Mammary epithelial cell (primary cell): ENCODE measurements at regions of chr9 and their contacts with region 1.

Region 1: DNA sequence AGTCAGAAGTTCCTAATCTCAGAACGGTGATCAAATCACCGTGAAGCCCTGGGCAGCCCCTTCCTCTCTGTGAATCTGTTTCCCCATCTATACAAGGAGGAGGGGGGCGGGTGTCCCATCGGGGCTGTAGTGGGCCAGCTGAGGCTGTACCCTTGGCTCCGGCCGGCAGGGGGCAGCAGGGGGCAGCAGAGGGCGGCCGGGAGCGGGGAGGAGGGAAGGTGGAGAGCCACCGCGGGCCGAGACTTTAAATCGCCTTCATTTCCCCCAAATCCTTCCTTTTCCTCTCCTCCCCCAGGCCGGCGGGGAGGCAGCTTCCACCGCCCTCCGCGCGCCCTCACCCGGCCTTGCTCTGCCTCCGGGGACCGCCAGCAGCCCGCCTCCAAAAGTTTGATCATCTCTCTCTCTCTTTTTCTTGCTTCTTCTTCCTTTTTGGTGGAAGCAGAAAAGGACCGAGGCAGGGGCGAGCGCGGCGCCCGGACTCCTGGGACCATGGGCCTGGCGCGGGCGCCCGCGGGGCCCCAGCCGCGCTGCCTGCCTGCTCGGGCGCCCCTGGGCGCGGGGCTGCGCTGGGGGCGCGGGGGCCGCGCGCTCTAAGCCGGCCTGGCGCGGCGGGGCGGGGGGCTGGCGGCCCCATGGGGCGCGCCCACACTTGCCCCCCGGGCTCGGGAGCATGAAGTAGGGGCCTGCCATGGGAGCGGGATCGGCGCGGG is at the start of gene COL27A1:
- DNase-seq: peak; percentile 65
- H3K4me3 ChIP-seq: peak within 1 kb of the TSS; percentile 74 to 84 (median 77)
- H3K27ac ChIP-seq: peak within 1 kb of the TSS; percentile 26
- H3K4me1 ChIP-seq: peaks cover 29% of the 10 kb centered on the region
- H3K27me3 ChIP-seq: peaks cover 12% of the 10 kb centered on the region
- CTCF ChIP-seq: peak; percentile 53 to 88
- total RNA-seq, gene COL27A1: 8.7 to 30.0 TPM

Region 2: DNA sequence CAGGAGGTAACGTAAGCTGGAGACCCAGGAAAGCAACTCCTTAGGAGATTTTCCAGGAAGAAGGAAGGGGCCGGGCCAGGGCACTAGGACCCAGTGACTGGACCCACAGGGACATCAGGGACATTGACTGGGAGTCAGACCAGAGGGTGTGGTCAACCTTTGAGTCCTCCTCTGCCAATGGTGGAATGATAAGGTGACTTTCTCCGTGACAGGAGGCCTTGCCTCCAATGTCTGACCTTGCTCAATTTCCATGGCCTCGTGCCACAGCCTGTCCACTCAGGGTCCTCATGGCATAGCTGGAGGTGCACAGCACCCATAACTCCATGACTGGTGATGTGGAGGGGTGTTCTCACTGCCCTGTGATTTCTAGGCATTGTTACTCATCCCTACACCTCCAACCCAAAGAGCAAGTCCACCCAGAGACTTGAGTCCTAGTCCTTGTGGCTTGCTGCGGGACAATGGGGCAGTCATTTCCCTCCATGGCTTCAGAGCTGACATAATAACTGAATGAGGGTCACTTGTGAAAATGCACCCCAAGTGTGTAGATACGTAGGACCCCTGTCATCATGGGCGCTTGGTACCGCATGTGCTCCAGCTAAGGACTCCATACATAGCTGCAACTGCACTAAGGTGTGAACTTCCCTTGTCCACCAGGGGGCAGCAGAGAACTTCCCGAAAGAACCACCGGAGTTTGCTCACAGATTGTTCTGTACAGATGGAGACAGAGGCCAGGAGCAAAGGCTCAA is 73.2 kb before region 1 on chr9:
- CTCF ChIA-PET with region 1: interaction called, 3 read pairs
- dilution Hi-C with region 1: no loop called
- in situ Hi-C with region 1: no loop called
- intact Hi-C with region 1: loop called (anchors 2 kb)
- DNase-seq: peak; percentile 72
- H3K4me3 ChIP-seq: no peak overlapping the region
- H3K27ac ChIP-seq: no peak overlapping the region
- H3K4me1 ChIP-seq: no peaks in the 10 kb centered on the region
- H3K27me3 ChIP-seq: no peaks in the 10 kb centered on the region
- CTCF ChIP-seq: peak; percentile 91 to 92

Region 3: GRCh38 chr9:114174876-114175771 is 19.7 kb after region 1 on chr9:
- CTCF ChIA-PET with region 1: no interaction called
- dilution Hi-C with region 1: no loop called
- in situ Hi-C with region 1: no loop called
- intact Hi-C with region 1: loop called (anchors 1 kb)
- DNase-seq: no peak
- H3K4me3 ChIP-seq: no peak overlapping the region
- H3K27ac ChIP-seq: no peak overlapping the region
- H3K4me1 ChIP-seq: peaks cover 27% of the 10 kb centered on the region
- H3K27me3 ChIP-seq: no peaks in the 10 kb centered on the region
- CTCF ChIP-seq: no peak

Region 4: DNA sequence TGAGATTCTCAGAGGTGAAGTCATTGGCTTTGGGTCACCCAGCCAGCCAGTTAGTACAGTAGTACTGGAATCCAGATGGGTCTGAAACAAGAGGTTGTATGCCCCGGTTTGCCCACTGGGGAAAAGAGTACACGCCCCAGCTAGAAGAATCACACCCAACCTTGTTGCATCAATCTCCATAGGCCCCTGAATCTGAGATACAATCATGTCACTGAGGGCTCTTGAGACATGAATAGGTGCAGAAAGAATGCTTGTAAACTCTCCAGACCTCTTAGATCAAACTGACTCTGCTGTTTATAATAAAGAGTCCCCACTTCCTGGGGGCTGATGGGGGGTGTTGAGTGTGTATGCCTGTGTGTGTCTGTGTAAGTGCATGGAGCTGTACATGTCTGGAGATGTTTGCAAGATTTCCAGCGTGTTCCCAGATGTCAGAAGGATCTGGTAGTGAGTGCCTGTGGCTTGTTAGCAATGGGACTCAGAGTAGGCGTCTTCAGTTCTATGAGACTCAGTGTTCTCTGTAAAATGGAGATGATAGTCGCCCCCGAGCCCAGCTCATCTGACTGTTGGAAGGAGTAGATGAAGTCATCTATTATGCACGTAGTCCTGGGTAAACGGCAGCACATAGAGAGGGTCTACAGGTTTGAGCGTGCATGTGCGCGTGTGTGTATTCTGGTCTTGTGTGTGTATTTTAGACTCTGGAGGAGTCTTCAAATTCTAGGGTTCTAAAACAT is 48.2 kb after region 1 on chr9:
- CTCF ChIA-PET with region 1: no interaction called
- dilution Hi-C with region 1: loop called (anchors 5 kb)
- in situ Hi-C with region 1: no loop called
- intact Hi-C with region 1: no loop called
- DNase-seq: peak; percentile 65
- H3K4me3 ChIP-seq: no peak overlapping the region
- H3K27ac ChIP-seq: no peak overlapping the region
- H3K4me1 ChIP-seq: peaks cover 5% of the 10 kb centered on the region
- H3K27me3 ChIP-seq: no peaks in the 10 kb centered on the region
- CTCF ChIP-seq: no peak

Region 5: DNA sequence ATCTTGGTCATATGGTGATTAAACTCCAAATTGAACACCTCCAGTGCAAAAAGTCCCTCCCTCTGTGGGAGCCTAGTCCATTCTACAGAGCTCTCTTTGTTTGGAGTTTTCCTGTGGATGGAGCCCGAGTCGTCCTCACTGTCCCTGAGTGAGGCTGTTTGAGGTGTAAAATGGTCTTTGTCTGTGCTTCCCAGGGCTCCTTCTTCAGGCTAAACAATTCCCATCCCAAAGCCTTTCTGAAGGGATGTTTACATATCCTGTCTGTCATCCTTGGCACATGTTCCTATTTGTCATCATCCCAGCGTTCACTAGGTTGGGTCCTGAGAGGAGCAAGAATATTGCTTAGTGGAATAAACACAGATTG is 68.8 kb after region 1 on chr9:
- CTCF ChIA-PET with region 1: interaction called, 5 read pairs
- dilution Hi-C with region 1: no loop called
- in situ Hi-C with region 1: no loop called
- intact Hi-C with region 1: loop called (anchors 5 kb)
- DNase-seq: peak; percentile 57
- H3K4me3 ChIP-seq: no peak overlapping the region
- H3K27ac ChIP-seq: no peak overlapping the region
- H3K4me1 ChIP-seq: peaks cover 37% of the 10 kb centered on the region
- H3K27me3 ChIP-seq: no peaks in the 10 kb centered on the region
- CTCF ChIP-seq: no peak

Region 6: GRCh38 chr9:114291064-114291474 is 135.7 kb after region 1 on chr9:
- CTCF ChIA-PET with region 1: interaction called, 12 read pairs
- dilution Hi-C with region 1: no loop called
- in situ Hi-C with region 1: loop called (anchors 5 kb)
- intact Hi-C with region 1: loop called (anchors 1 kb)
- DNase-seq: peak; percentile 50
- H3K4me3 ChIP-seq: no peak overlapping the region
- H3K27ac ChIP-seq: no peak overlapping the region
- H3K4me1 ChIP-seq: peaks cover 20% of the 10 kb centered on the region
- H3K27me3 ChIP-seq: no peaks in the 10 kb centered on the region
- CTCF ChIP-seq: peak; percentile 82 to 84

Region 7: DNA sequence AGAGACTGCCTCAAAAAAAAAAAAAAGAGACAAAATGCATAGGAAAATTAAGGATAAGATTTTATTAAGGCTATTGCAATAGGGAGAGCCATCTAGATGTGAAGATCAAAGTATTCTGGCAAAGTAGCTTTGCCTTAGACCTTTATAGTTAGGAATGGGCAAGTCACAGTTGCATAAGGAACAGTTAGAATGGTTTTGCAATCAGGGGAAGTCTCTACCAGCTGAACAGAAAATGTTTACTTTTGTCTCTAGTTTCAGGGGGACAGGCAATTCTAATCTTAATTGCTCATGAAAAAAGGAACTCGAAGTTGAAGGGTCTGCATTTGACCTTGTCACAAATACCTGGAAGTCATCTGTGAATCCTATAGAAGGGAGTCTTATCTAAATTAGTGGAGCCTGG is 419.0 kb after region 1 on chr9:
- CTCF ChIA-PET with region 1: no interaction called
- dilution Hi-C with region 1: no loop called
- in situ Hi-C with region 1: no loop called
- intact Hi-C with region 1: no loop called
- DNase-seq: no peak
- H3K4me3 ChIP-seq: no peak overlapping the region
- H3K27ac ChIP-seq: no peak overlapping the region
- H3K4me1 ChIP-seq: no peaks in the 10 kb centered on the region
- H3K27me3 ChIP-seq: no peaks in the 10 kb centered on the region
- CTCF ChIP-seq: no peak